ENCODE measurements at regions of chr19 and their contacts with region 1.

Region 1: DNA sequence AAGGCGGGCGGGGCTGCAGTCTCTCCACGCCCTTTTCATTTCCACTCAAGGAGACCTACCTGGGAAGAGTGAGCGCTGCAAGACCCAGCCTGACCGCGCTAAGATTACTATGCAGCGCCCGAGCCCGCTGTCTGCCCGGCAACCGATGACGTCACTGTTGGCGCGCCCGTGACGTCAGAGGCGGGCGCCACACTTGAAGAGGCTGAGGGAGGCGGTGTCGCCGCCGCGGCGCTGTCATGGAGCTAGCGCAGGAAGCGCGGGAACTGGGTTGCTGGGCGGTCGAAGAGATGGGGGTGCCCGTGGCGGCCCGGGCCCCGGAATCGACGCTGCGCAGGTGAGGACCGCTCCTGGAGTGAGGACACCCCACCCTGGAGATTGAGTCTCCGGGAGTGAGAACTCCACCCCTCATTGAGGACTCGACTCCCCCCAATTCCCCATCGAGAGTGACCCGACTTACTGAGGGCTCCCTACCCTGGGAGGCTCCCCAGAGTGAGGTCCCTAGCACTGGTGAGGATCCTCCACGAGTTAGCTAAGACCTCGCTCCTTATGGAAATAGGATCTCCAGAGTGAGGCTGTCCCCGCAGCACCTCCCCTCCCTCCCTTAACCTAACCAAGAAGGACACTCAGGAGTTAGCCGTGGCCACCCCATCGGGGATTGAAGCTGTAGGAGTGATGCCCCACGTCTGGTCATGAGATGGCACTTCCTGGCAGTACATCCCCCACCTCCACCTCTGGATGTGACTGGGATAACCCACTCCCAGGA is at the start of gene HAUS5:
- DNase-seq: peak; percentile 95
- H3K4me3 ChIP-seq: peak within 1 kb of the TSS; percentile 82
- H3K27ac ChIP-seq: peak within 1 kb of the TSS; percentile 27
- H3K4me1 ChIP-seq: peaks cover 31% of the 10 kb centered on the region
- CTCF ChIP-seq: no peak
- total RNA-seq, gene HAUS5: 61.5 and 66.8 TPM in 2 replicates

Region 2: DNA sequence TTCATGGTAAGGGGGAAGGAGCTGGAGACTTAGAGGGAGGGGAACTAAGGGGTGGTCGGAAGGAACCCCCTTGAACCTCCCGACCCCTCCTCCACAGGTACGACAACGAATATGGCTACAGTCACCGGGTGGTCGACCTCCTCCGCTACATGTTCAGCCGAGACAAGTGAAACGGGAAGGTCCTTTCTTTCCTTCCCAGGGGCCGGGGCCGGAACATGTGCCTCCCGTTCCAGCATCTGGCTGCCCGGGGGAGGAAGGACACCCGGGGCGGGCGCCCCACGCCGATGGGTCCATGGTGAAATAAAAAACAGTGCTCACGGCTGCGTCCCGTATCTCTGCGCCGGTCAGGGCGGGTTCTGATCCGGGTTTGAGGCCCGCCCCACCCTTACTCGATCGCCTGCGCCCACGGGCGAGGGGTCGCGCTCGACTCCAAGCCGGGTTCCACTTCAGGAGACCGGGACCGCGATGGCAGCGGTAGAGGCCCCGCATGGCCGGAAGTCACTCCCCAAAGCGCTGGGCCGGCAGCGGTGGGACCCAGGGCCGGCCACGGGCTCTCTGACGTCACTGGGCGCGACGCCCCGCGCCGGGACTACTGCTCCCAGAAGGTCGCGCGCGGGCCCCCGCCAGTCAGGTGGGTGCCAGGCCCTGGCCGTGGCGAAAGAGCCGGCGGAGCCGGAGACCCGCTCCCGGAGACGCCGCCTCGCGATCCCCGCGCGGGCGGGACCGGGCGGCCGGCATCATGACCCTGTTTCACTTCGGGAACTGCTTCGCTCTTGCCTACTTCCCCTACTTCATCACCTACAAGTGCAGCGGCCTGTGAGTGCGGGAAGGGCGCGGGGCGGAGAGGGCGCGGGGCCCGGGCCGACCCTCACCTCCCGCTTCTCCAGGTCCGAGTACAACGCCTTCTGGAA is 67.5 kb before region 1 on chr19 and contains the start of gene TMEM147:
- CTCF ChIA-PET with region 1: no interaction called
- POLR2A ChIA-PET with region 1: no interaction called
- intact Hi-C with region 1: loop called (anchors 1 kb)
- DNase-seq: peak; percentile 92
- H3K4me3 ChIP-seq: peak within 1 kb of the TSS; percentile 80
- H3K27ac ChIP-seq: peak within 1 kb of the TSS; percentile 4
- H3K4me1 ChIP-seq: peaks cover 28% of the 10 kb centered on the region
- CTCF ChIP-seq: no peak
- total RNA-seq, gene TMEM147: 83.2 and 85.8 TPM in 2 replicates

Region 3: DNA sequence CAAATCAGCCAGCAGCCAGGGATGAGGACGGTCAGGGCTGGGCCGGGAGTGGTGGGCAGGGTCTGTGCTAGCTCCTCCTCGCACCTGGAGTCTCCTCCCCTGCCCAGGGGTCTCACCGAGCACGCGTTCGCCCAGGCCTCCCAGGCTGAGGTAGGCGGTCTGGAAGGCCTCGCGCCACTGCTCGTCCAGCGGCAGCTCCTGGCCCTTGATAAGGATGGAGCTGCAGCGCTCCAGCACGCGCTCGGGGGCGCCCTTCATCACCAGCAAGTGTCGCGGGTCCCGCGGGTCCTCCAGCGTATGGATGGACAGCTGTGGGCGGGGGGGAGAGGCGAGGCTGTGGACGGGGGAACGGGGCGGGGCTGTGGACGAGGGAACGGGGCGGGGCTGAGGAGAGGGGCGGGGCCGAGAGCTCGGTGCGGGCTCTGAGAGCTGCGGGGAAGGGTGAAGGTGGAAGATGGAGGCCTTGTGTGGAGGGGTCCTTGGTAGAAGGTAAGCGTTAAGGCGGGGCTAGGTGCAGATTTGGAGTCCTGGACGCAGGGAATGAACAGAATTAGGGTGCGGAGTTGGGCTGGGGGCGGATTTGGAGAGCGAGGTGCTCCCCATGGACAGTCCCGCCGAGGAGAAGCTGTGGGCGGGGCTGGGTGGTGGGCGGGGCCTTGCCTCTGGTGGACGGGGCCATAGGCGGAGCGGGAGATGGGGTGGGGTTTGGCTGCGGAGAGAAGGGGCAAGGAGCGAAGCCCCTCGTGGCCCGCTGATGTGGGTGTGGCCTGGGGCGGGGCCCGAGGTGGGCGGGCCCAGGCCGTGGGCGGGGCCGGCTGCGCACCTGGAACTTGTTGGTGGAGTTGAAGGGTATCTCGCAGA is 55.0 kb before region 1 on chr19:
- CTCF ChIA-PET with region 1: interaction called, 10 read pairs
- POLR2A ChIA-PET with region 1: interaction called, 3 read pairs
- intact Hi-C with region 1: no loop called
- DNase-seq: peak; percentile 35
- H3K4me3 ChIP-seq: no peak overlapping the region
- H3K27ac ChIP-seq: no peak overlapping the region
- H3K4me1 ChIP-seq: peaks cover 18% of the 10 kb centered on the region
- CTCF ChIP-seq: no peak

Region 4: GRCh38 chr19:35628565-35629331 is 16.0 kb after region 1 on chr19 and contains the start of gene RBM42:
- CTCF ChIA-PET with region 1: no interaction called
- POLR2A ChIA-PET with region 1: interaction called, 3 read pairs
- intact Hi-C with region 1: loop called (anchors 2 kb)
- DNase-seq: peak; percentile 99
- H3K4me3 ChIP-seq: peak within 1 kb of the TSS; percentile 83
- H3K27ac ChIP-seq: peak within 1 kb of the TSS; percentile 68
- H3K4me1 ChIP-seq: peaks cover 18% of the 10 kb centered on the region
- CTCF ChIP-seq: no peak
- total RNA-seq, gene RBM42: 62.0 and 73.6 TPM in 2 replicates

Region 5: DNA sequence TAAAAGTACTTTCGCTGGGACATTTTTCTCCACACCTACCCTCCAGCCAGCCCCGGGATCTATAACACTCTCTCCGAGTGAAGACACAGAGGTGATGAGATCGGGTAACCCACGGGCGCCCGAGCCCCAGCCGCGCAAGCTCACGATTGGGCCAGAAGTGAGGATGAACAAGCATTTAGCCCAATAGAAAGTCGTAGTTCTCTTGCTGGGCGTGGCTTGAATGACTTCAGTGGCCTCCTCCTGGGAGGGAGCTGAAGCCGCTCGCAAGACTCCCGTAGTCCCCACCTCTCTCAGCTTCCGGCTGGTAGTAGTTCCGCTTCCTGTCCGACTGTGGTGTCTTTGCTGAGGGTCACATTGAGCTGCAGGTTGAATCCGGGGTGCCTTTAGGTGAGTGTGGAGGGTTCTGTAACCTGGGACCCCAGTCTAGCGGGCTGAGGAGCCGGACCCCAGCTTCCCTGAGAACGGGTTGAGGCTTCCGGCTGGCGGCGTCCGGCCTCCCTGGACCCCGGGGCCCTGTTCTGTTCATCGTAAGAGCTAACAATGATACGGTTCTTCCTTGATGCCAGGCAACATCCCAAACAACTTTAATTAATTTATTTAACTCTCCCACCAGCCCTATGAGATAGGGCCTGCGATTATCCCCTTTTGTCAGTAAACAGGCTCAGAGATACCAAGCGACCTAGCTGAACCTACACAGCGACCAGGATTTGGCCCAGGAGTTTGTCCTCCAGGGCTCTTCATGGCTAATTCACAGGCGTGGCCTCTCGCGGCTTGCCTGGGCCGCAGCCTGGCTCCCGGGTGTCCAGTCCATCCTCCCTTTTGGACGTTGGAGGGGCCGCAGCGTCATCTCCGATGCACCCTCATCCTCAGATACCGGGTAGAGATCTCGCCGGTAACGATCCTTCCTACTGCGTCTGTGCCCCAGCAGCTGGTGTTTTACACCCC is 35.5 kb after region 1 on chr19 and contains the start of gene COX6B1:
- CTCF ChIA-PET with region 1: no interaction called
- POLR2A ChIA-PET with region 1: interaction called, 8 read pairs
- intact Hi-C with region 1: loop called (anchors 1 kb)
- DNase-seq: peak; percentile 99
- H3K4me3 ChIP-seq: peak within 1 kb of the TSS; percentile 89
- H3K27ac ChIP-seq: peak within 1 kb of the TSS; percentile 44
- H3K4me1 ChIP-seq: peaks cover 36% of the 10 kb centered on the region
- CTCF ChIP-seq: no peak
- total RNA-seq, gene COX6B1: 404 and 536 TPM in 2 replicates